ENCODE measurements at regions of chr5 and their contacts with region 1.

Region 1: GRCh38 chr5:72338687-72339209 is 18.6 kb downstream of the PTCD2 start:
- DNase-seq: no peak
- ATAC-seq: no peak
- H3K4me3 ChIP-seq: no peak overlapping the region
- H3K4me3 Mint-ChIP-seq: no peak overlapping the region
- H3K27ac ChIP-seq: no peak overlapping the region
- H3K27ac Mint-ChIP-seq: no peak overlapping the region
- H3K4me1 ChIP-seq: no peaks in the 10 kb centered on the region
- H3K4me1 Mint-ChIP-seq: no peaks in the 10 kb centered on the region
- H3K27me3 ChIP-seq: no peaks in the 10 kb centered on the region
- H3K27me3 Mint-ChIP-seq: no peaks in the 10 kb centered on the region
- CTCF ChIP-seq: no peak

Region 2: DNA sequence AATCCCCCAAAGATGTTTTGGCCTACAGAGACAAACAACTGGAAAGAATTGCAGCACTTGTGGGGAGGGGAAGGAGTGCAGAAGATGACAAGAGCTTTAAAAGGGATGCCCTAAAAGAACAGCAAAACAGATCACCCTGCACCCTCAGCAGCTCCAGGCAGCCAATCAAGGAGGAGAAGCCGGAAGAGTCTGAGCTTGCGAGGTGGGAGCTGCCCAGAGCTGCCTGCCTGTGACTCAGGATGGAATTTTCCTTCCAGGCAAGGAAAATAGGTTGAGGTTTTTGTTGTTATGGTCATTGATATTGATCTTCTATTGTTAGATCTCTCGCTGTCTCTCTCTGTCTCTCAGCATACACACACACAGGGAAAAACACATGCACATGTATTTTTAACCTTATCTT is 301.8 kb before region 1 on chr5:
- CTCF ChIA-PET with region 1: no interaction called
- POLR2A ChIA-PET with region 1: no interaction called
- intact Hi-C with region 1: no loop called
- DNase-seq: no peak
- ATAC-seq: no peak
- H3K4me3 ChIP-seq: no peak overlapping the region
- H3K4me3 Mint-ChIP-seq: no peak overlapping the region
- H3K27ac ChIP-seq: no peak overlapping the region
- H3K27ac Mint-ChIP-seq: no peak overlapping the region
- H3K4me1 ChIP-seq: no peaks in the 10 kb centered on the region
- H3K4me1 Mint-ChIP-seq: no peaks in the 10 kb centered on the region
- H3K27me3 ChIP-seq: no peaks in the 10 kb centered on the region
- H3K27me3 Mint-ChIP-seq: peaks cover 14% of the 10 kb centered on the region
- CTCF ChIP-seq: no peak

Region 3: GRCh38 chr5:72295539-72295938 is 43.2 kb before region 1 on chr5:
- CTCF ChIA-PET with region 1: no interaction called
- POLR2A ChIA-PET with region 1: no interaction called
- intact Hi-C with region 1: loop called in 1 of 2 experiments (anchors 1 kb)
- DNase-seq: no peak
- ATAC-seq: no peak
- H3K4me3 ChIP-seq: no peak overlapping the region
- H3K4me3 Mint-ChIP-seq: no peak overlapping the region
- H3K27ac ChIP-seq: no peak overlapping the region
- H3K27ac Mint-ChIP-seq: no peak overlapping the region
- H3K4me1 ChIP-seq: no peaks in the 10 kb centered on the region
- H3K4me1 Mint-ChIP-seq: peaks cover 20% of the 10 kb centered on the region
- H3K27me3 ChIP-seq: no peaks in the 10 kb centered on the region
- H3K27me3 Mint-ChIP-seq: no peaks in the 10 kb centered on the region
- CTCF ChIP-seq: no peak

Region 4: GRCh38 chr5:72355706-72356299 is 17.1 kb after region 1 on chr5:
- CTCF ChIA-PET with region 1: no interaction called
- POLR2A ChIA-PET with region 1: no interaction called
- intact Hi-C with region 1: no loop called
- DNase-seq: no peak
- ATAC-seq: no peak
- H3K4me3 ChIP-seq: no peak overlapping the region
- H3K4me3 Mint-ChIP-seq: no peak overlapping the region
- H3K27ac ChIP-seq: no peak overlapping the region
- H3K27ac Mint-ChIP-seq: peak overlapping the region; percentile 23
- H3K4me1 ChIP-seq: no peaks in the 10 kb centered on the region
- H3K4me1 Mint-ChIP-seq: no peaks in the 10 kb centered on the region
- H3K27me3 ChIP-seq: no peaks in the 10 kb centered on the region
- H3K27me3 Mint-ChIP-seq: no peaks in the 10 kb centered on the region
- CTCF ChIP-seq: no peak

Region 5: GRCh38 chr5:72618708-72619107 is 280.0 kb after region 1 on chr5:
- CTCF ChIA-PET with region 1: no interaction called
- POLR2A ChIA-PET with region 1: no interaction called
- intact Hi-C with region 1: no loop called
- DNase-seq: no peak
- ATAC-seq: no peak
- H3K4me3 ChIP-seq: no peak overlapping the region
- H3K4me3 Mint-ChIP-seq: no peak overlapping the region
- H3K27ac ChIP-seq: no peak overlapping the region
- H3K27ac Mint-ChIP-seq: no peak overlapping the region
- H3K4me1 ChIP-seq: no peaks in the 10 kb centered on the region
- H3K4me1 Mint-ChIP-seq: no peaks in the 10 kb centered on the region
- H3K27me3 ChIP-seq: no peaks in the 10 kb centered on the region
- H3K27me3 Mint-ChIP-seq: peaks cover 9% of the 10 kb centered on the region
- CTCF ChIP-seq: no peak

Region 6: GRCh38 chr5:73274866-73275663 is 936.3 kb after region 1 on chr5:
- CTCF ChIA-PET with region 1: no interaction called
- POLR2A ChIA-PET with region 1: no interaction called
- intact Hi-C with region 1: no loop called
- DNase-seq: no peak
- ATAC-seq: no peak
- H3K4me3 ChIP-seq: no peak overlapping the region
- H3K4me3 Mint-ChIP-seq: no peak overlapping the region
- H3K27ac ChIP-seq: no peak overlapping the region
- H3K27ac Mint-ChIP-seq: no peak overlapping the region
- H3K4me1 ChIP-seq: no peaks in the 10 kb centered on the region
- H3K4me1 Mint-ChIP-seq: no peaks in the 10 kb centered on the region
- H3K27me3 ChIP-seq: peaks cover 0 to 6% of the 10 kb centered on the region in 2 experiments
- H3K27me3 Mint-ChIP-seq: peaks cover 51% of the 10 kb centered on the region
- CTCF ChIP-seq: no peak

Measured in CD8-positive, alpha-beta T cell (primary cell).